ENCODE measurements at regions of chr4 and their contacts with region 1.

Region 1: DNA sequence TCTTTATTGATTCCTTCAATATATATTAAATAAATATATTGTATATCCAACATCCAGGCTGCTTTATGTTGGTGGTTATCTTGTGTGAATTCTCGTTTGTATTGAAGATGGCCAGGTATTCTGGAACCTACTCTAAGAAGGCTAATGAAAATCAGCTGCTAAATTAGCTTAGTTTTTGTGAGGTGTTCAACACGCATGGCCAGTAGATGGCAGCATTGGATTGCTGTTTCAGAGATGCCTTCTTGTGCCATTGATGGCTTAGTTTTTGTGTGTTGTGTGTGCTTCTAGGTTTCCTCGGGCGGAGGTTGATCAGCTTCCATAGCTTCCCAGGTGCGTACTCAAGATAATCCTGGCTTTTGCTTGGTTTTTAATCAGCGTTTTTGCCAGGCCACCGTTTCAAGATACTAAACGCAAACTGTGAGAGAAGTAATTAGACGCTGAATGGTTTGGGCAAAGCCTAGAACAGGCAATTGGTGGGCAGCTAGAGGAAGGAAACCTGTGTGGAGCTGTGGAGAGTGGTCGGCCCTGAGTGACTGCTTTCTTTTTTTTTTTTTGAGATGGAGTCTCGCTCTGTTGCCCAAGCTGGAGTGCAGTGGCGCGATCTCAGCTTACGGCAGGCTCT is 15.1 kb downstream of the NOCT start:
- DNase-seq: peak; percentile 85
- ATAC-seq: peak; percentile 76
- H3K4me3 ChIP-seq: no peak overlapping the region
- H3K4me3 Mint-ChIP-seq: peak overlapping the region; percentile 1
- H3K27ac ChIP-seq: no peak overlapping the region
- H3K27ac Mint-ChIP-seq: no peak overlapping the region
- H3K4me1 ChIP-seq: peaks cover 18 to 20% of the 10 kb centered on the region in 2 donors
- H3K4me1 Mint-ChIP-seq: peaks cover 26% of the 10 kb centered on the region
- H3K27me3 ChIP-seq: no peaks in the 10 kb centered on the region
- H3K27me3 Mint-ChIP-seq: no peaks in the 10 kb centered on the region
- CTCF ChIP-seq: peak; percentile 87

Region 2: GRCh38 chr4:138555584-138555983 is 475.1 kb before region 1 on chr4:
- CTCF ChIA-PET with region 1: no interaction called
- POLR2A ChIA-PET with region 1: no interaction called
- intact Hi-C with region 1: no loop called
- DNase-seq: no peak
- ATAC-seq: no peak
- H3K4me3 ChIP-seq: no peak overlapping the region
- H3K4me3 Mint-ChIP-seq: no peak overlapping the region
- H3K27ac ChIP-seq: no peak overlapping the region
- H3K27ac Mint-ChIP-seq: no peak overlapping the region
- H3K4me1 ChIP-seq: no peaks in the 10 kb centered on the region
- H3K4me1 Mint-ChIP-seq: no peaks in the 10 kb centered on the region
- H3K27me3 ChIP-seq: no peaks in the 10 kb centered on the region
- H3K27me3 Mint-ChIP-seq: no peaks in the 10 kb centered on the region
- CTCF ChIP-seq: no peak

Region 3: DNA sequence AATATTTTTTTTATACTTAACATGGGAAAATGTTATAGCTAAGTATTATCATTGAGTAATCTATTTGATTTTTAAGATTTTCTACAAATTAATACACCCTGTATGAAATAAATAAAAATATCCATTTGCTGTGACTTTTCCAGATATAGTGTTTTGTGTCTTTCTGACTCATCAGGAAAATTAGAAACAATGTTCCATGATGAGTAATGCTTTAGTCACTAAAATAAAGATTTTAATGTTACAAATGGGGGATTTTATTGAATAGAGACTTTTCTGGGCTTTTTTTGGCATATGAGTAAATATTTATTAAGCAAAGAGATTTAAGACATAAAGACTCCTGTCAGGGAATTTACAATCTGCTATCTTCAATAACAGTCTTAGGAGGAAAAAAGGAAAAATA is 294.4 kb before region 1 on chr4:
- CTCF ChIA-PET with region 1: no interaction called
- POLR2A ChIA-PET with region 1: no interaction called
- intact Hi-C with region 1: no loop called
- DNase-seq: no peak
- ATAC-seq: no peak
- H3K4me3 ChIP-seq: no peak overlapping the region
- H3K4me3 Mint-ChIP-seq: no peak overlapping the region
- H3K27ac ChIP-seq: no peak overlapping the region
- H3K27ac Mint-ChIP-seq: no peak overlapping the region
- H3K4me1 ChIP-seq: no peaks in the 10 kb centered on the region
- H3K4me1 Mint-ChIP-seq: no peaks in the 10 kb centered on the region
- H3K27me3 ChIP-seq: no peaks in the 10 kb centered on the region
- H3K27me3 Mint-ChIP-seq: no peaks in the 10 kb centered on the region
- CTCF ChIP-seq: no peak

Region 4: DNA sequence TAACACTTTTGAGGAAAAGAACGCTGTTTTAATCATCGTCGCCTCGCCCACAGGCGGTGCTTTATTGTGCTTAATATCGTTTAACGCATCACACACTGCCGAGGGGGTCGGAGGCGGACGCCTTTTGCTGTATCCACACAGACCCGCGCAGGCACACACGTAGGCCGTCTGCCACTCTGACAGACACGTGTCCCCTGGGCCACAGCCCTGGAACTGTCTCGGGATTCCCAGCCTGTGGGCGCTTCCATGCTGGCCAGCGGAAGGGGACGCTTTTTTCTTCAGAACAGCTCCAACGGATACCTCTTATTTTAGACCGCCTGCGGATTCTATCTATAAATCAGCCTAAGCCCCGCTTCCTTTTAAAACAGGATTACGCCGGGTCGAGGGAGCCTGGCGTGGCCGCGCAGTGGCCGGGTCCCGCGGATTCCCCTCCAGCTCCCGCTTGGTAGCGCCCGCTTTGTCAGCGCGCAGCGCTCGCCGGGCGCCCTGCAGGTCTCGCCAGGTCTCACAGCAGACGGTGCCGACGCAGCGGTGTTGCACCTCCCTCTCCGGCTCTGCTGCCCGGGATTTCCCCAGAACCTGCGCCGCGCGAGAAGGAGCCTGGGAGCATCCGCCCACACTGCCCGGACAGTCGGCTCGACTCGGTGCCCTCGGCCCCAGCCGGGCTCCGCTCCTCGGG is 15.3 kb before region 1 on chr4 and contains the start of gene NOCT:
- CTCF ChIA-PET with region 1: interaction called, 77 read pairs
- POLR2A ChIA-PET with region 1: no interaction called
- intact Hi-C with region 1: loop called (anchors 1 kb)
- DNase-seq: peak; percentile 97
- ATAC-seq: peak; percentile 92
- H3K4me3 ChIP-seq: peak within 1 kb of the TSS; percentile 56 to 86 (median 78)
- H3K4me3 Mint-ChIP-seq: peak within 1 kb of the TSS; percentile 92
- H3K27ac ChIP-seq: peak within 1 kb of the TSS; percentile 88 to 98
- H3K27ac Mint-ChIP-seq: peak within 1 kb of the TSS; percentile 98
- H3K4me1 ChIP-seq: peaks cover 14 to 18% of the 10 kb centered on the region in 2 donors
- H3K4me1 Mint-ChIP-seq: peaks cover 28% of the 10 kb centered on the region
- H3K27me3 ChIP-seq: no peaks in the 10 kb centered on the region
- H3K27me3 Mint-ChIP-seq: no peaks in the 10 kb centered on the region
- CTCF ChIP-seq: no peak
- total RNA-seq, gene NOCT: 2.6 and 3.0 TPM in 2 replicates

Region 5: GRCh38 chr4:139053909-139054308 is 23.2 kb after region 1 on chr4:
- CTCF ChIA-PET with region 1: interaction called, 13 read pairs
- POLR2A ChIA-PET with region 1: no interaction called
- intact Hi-C with region 1: no loop called
- DNase-seq: no peak
- ATAC-seq: no peak
- H3K4me3 ChIP-seq: no peak overlapping the region
- H3K4me3 Mint-ChIP-seq: no peak overlapping the region
- H3K27ac ChIP-seq: no peak overlapping the region
- H3K27ac Mint-ChIP-seq: no peak overlapping the region
- H3K4me1 ChIP-seq: no peaks in the 10 kb centered on the region
- H3K4me1 Mint-ChIP-seq: peaks cover 4% of the 10 kb centered on the region
- H3K27me3 ChIP-seq: no peaks in the 10 kb centered on the region
- H3K27me3 Mint-ChIP-seq: no peaks in the 10 kb centered on the region
- CTCF ChIP-seq: no peak

Region 6: GRCh38 chr4:139083956-139084803 is 53.5 kb after region 1 on chr4:
- CTCF ChIA-PET with region 1: interaction called, 26 read pairs
- POLR2A ChIA-PET with region 1: no interaction called
- intact Hi-C with region 1: loop called (anchors 2 kb)
- DNase-seq: peak; percentile 92
- ATAC-seq: peak; percentile 62
- H3K4me3 ChIP-seq: peak overlapping the region; percentile 79 to 98 (median 97)
- H3K4me3 Mint-ChIP-seq: peak overlapping the region; percentile 87
- H3K27ac ChIP-seq: peak overlapping the region; percentile 89 to 93
- H3K27ac Mint-ChIP-seq: peak overlapping the region; percentile 94
- H3K4me1 ChIP-seq: peaks cover 14 to 23% of the 10 kb centered on the region in 2 donors
- H3K4me1 Mint-ChIP-seq: peaks cover 36% of the 10 kb centered on the region
- H3K27me3 ChIP-seq: no peaks in the 10 kb centered on the region
- H3K27me3 Mint-ChIP-seq: no peaks in the 10 kb centered on the region
- CTCF ChIP-seq: peak; percentile 42

Region 7: DNA sequence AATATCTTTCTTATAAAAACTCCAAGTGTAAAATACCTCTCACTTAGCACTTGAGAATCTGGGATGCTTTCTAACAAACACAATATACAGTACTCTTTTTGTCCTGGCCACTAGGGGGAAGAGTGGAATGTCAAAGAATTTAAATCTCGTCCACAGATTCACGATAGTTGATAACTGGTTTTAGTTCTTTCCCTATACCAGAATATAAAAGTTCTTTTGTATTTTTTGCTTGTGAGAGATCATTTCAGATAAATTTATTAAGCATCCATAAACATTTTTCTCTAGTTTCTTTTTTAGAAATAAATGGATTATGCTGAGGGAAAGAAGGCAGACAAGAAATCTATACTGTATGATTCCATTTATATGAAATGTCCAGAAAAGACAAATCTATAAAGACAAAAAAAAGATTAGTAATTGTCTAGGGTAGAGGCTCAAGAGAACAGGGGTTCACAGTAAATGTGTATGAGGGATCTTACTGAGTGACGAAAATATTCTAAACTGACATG is 198.9 kb after region 1 on chr4:
- CTCF ChIA-PET with region 1: interaction called, 14 read pairs
- POLR2A ChIA-PET with region 1: interaction called, 8 read pairs
- intact Hi-C with region 1: loop called (anchors 1 kb)
- DNase-seq: peak; percentile 66
- ATAC-seq: peak; percentile 64
- H3K4me3 ChIP-seq: no peak overlapping the region
- H3K4me3 Mint-ChIP-seq: no peak overlapping the region
- H3K27ac ChIP-seq: no peak overlapping the region
- H3K27ac Mint-ChIP-seq: no peak overlapping the region
- H3K4me1 ChIP-seq: no peaks in the 10 kb centered on the region
- H3K4me1 Mint-ChIP-seq: peaks cover 1% of the 10 kb centered on the region
- H3K27me3 ChIP-seq: no peaks in the 10 kb centered on the region
- H3K27me3 Mint-ChIP-seq: no peaks in the 10 kb centered on the region
- CTCF ChIP-seq: peak; percentile 81

Region 8: DNA sequence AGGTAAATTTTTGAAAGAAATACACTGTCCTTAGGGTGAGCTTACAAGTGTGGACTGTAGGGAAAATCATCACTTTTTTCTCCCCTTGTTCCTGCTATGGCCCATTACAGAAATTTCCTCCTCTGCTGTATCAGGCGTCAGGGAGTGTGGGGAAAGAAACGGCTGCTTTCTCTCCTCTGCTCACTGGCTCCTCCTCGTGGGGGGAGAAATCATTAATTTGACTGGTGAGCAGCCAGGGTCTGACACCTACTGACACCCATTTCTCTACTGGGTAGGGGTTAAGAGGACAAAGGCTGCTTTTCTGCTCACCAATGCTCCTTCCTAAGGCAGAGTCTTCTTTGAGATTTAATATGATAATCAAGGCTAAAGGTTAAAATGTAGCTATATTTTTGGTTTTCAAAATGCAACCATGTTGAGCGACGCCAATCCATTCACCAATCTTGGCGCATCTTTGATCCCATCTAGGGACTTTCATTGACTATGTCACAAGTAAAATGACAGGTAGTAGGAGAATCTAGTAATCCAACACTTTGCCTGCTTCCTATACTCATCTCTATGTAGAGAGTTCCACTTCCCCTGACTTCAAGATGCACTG is 500.2 kb after region 1 on chr4:
- CTCF ChIA-PET with region 1: interaction called, 61 read pairs
- POLR2A ChIA-PET with region 1: no interaction called
- intact Hi-C with region 1: loop called (anchors 1 kb)
- DNase-seq: peak; percentile 66
- ATAC-seq: peak; percentile 76
- H3K4me3 ChIP-seq: no peak overlapping the region
- H3K4me3 Mint-ChIP-seq: no peak overlapping the region
- H3K27ac ChIP-seq: no peak overlapping the region
- H3K27ac Mint-ChIP-seq: no peak overlapping the region
- H3K4me1 ChIP-seq: no peaks in the 10 kb centered on the region
- H3K4me1 Mint-ChIP-seq: peaks cover 3% of the 10 kb centered on the region
- H3K27me3 ChIP-seq: no peaks in the 10 kb centered on the region
- H3K27me3 Mint-ChIP-seq: no peaks in the 10 kb centered on the region
- CTCF ChIP-seq: peak; percentile 82

Region 9: DNA sequence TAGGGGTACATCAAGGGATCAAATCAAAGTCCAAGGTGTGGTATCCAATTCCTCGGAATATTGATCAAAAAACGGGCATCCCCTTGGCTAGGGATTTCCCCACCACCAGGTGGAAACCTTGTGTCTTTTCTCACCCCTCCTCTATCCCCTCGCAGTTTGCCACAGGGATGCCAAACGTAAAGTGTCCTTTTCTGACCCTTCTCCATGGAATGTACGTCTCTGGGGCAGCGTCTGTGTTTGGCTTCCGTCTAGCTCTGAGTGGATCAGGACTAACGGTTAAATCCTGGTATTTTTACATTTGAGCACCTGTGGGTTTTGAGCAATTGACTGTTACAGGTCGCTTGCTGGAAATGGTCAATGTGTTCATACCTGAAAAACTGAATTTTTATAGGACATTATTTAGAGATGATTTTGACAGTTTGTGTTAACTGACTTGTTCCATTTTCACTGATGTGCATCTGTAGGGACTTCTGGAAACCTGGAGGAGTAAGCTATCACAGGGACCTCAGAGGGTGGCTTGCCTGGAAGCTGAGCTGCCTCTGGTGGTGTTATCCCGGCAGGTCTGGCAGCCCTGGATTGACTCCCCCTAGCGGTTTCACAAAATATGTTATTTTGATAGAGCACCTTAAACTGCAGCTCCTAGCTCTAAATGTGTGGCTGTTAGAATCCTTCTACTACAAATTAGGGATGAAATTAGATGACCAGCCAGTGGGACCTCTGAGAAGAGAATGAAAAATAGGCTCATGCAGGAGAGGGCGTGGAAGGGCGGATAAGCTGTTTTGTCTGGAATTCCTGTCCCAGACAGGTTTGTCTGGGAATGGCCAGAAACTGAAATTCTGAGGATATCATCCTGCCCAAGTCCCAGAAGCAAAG is 626.1 kb after region 1 on chr4:
- CTCF ChIA-PET with region 1: interaction called, 82 read pairs
- POLR2A ChIA-PET with region 1: no interaction called
- intact Hi-C with region 1: no loop called
- DNase-seq: peak; percentile 71
- ATAC-seq: peak; percentile 78
- H3K4me3 ChIP-seq: no peak overlapping the region
- H3K4me3 Mint-ChIP-seq: no peak overlapping the region
- H3K27ac ChIP-seq: no peak overlapping the region
- H3K27ac Mint-ChIP-seq: no peak overlapping the region
- H3K4me1 ChIP-seq: no peaks in the 10 kb centered on the region
- H3K4me1 Mint-ChIP-seq: peaks cover 2% of the 10 kb centered on the region
- H3K27me3 ChIP-seq: no peaks in the 10 kb centered on the region
- H3K27me3 Mint-ChIP-seq: peaks cover 13% of the 10 kb centered on the region
- CTCF ChIP-seq: peak; percentile 89